Psoas muscle (tissue), 8 donors: ENCODE measurements at regions of chr1 and their contacts with region 1.

Region 1: GRCh38 chr1:75265792-75266191 is 131.6 kb downstream of the LHX8 start:
- DNase-seq: no peak
- ATAC-seq: peak in 2 of 4 donors; percentile 44 to 63
- H3K4me3 ChIP-seq: no peak overlapping the region
- H3K27ac ChIP-seq: no peak overlapping the region
- H3K4me1 ChIP-seq: no peaks in the 10 kb centered on the region
- H3K27me3 ChIP-seq: no peaks in the 10 kb centered on the region
- CTCF ChIP-seq: peak; percentile 63

Region 2: GRCh38 chr1:75208862-75209261 is 56.9 kb before region 1 on chr1:
- intact Hi-C with region 1: no loop called
- DNase-seq: no peak
- ATAC-seq: no peak
- H3K4me3 ChIP-seq: no peak overlapping the region
- H3K27ac ChIP-seq: no peak overlapping the region
- H3K4me1 ChIP-seq: no peaks in the 10 kb centered on the region
- H3K27me3 ChIP-seq: no peaks in the 10 kb centered on the region
- CTCF ChIP-seq: no peak

Region 3: DNA sequence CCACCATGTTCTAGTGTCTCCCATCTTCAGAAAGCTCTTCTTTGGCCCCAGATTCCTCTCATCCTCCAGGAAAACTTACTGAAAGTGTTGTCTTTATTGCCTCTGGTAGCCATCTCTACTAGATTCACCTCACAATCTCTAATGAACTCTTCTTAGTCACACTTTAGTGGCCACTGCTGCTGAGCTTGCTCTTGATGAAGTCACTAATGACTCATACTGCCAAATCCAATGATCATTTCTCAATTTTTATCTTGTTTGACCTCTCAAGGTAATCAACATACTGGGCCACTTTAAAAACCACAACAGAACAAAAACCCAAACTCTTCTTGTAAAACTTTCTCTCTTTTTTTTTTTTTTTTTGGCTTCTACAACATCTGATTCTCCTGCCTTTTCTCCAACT is 64.8 kb after region 1 on chr1:
- intact Hi-C with region 1: no loop called
- DNase-seq: no peak
- ATAC-seq: no peak
- H3K4me3 ChIP-seq: no peak overlapping the region
- H3K27ac ChIP-seq: no peak overlapping the region
- H3K4me1 ChIP-seq: peaks cover 21% of the 10 kb centered on the region
- H3K27me3 ChIP-seq: no peaks in the 10 kb centered on the region
- CTCF ChIP-seq: no peak

Region 4: GRCh38 chr1:75632350-75632949 is 366.7 kb after region 1 on chr1:
- intact Hi-C with region 1: loop called (anchors 5 to 10 kb)
- DNase-seq: no peak
- ATAC-seq: peak in 2 of 4 donors; percentile 58 to 64
- H3K4me3 ChIP-seq: no peak overlapping the region
- H3K27ac ChIP-seq: no peak overlapping the region
- H3K4me1 ChIP-seq: no peaks in the 10 kb centered on the region
- H3K27me3 ChIP-seq: no peaks in the 10 kb centered on the region
- CTCF ChIP-seq: peak; percentile 70